CD4-positive, alpha-beta T cell (primary cell): ENCODE measurements at regions of chr14 and their contacts with region 1.

Region 1: GRCh38 chr14:99252940-99253868 is 18.8 kb downstream of the BCL11B start:
- DNase-seq: peak in 11 of 14 experiments; percentile 55 to 87 (median 71)
- ATAC-seq: peak; percentile 48
- H3K4me3 ChIP-seq: peak overlapping the region; percentile 33
- H3K4me3 Mint-ChIP-seq: peak overlapping the region; percentile 83
- H3K27ac ChIP-seq: peak overlapping the region; percentile 95 to 97
- H3K27ac Mint-ChIP-seq: peak overlapping the region; percentile 99
- H3K4me1 ChIP-seq: peaks cover 100% of the 10 kb centered on the region
- H3K4me1 Mint-ChIP-seq: peaks cover 97% of the 10 kb centered on the region
- H3K27me3 ChIP-seq: no peaks in the 10 kb centered on the region
- H3K27me3 Mint-ChIP-seq: no peaks in the 10 kb centered on the region
- CTCF ChIP-seq: no peak

Region 2: GRCh38 chr14:99235582-99236320 is 17.5 kb before region 1 on chr14:
- CTCF ChIA-PET with region 1: interaction called, 21 read pairs
- POLR2A ChIA-PET with region 1: interaction called, 4,389 read pairs
- intact Hi-C with region 1: loop called in 1 of 2 experiments (anchors 2 kb)
- DNase-seq: peak in 4 of 14 experiments; percentile 17 to 63 (median 53)
- ATAC-seq: peak; percentile 3
- H3K4me3 ChIP-seq: peak overlapping the region; percentile 43
- H3K4me3 Mint-ChIP-seq: peak overlapping the region; percentile 94
- H3K27ac ChIP-seq: peak overlapping the region; percentile 95 to 97
- H3K27ac Mint-ChIP-seq: peak overlapping the region; percentile 95
- H3K4me1 ChIP-seq: peaks cover 96% of the 10 kb centered on the region
- H3K4me1 Mint-ChIP-seq: peaks cover 96% of the 10 kb centered on the region
- H3K27me3 ChIP-seq: no peaks in the 10 kb centered on the region
- H3K27me3 Mint-ChIP-seq: no peaks in the 10 kb centered on the region
- CTCF ChIP-seq: no peak

Region 3: GRCh38 chr14:99241325-99242010 is 11.7 kb before region 1 on chr14:
- CTCF ChIA-PET with region 1: interaction called, 11 read pairs
- POLR2A ChIA-PET with region 1: interaction called, 4,389 read pairs
- intact Hi-C with region 1: loop called in 1 of 2 experiments (anchors 1 kb)
- DNase-seq: peak in 9 of 14 experiments; percentile 49 to 82 (median 66)
- ATAC-seq: peak; percentile 38
- H3K4me3 ChIP-seq: peak overlapping the region; percentile 42
- H3K4me3 Mint-ChIP-seq: peak overlapping the region; percentile 94
- H3K27ac ChIP-seq: peak overlapping the region; percentile 95 to 97
- H3K27ac Mint-ChIP-seq: peak overlapping the region; percentile 95
- H3K4me1 ChIP-seq: peaks cover 89% of the 10 kb centered on the region
- H3K4me1 Mint-ChIP-seq: peaks cover 88% of the 10 kb centered on the region
- H3K27me3 ChIP-seq: no peaks in the 10 kb centered on the region
- H3K27me3 Mint-ChIP-seq: no peaks in the 10 kb centered on the region
- CTCF ChIP-seq: no peak